Natural killer cell (primary cell): ENCODE measurements at regions of chr6 and their contacts with region 1.

Region 1: GRCh38 chr6:136317021-136317694 is 27.5 kb upstream of the BCLAF1 start:
- DNase-seq: peak; percentile 31 to 88
- ATAC-seq: peak; percentile 79 to 98 (median 94)
- H3K4me3 ChIP-seq: no peak overlapping the region
- H3K4me3 Mint-ChIP-seq: no peak overlapping the region
- H3K27ac ChIP-seq: no peak overlapping the region
- H3K27ac Mint-ChIP-seq: no peak overlapping the region
- H3K4me1 ChIP-seq: no peaks in the 10 kb centered on the region
- H3K4me1 Mint-ChIP-seq: peaks cover 0 to 4% of the 10 kb centered on the region in 2 donors
- H3K27me3 ChIP-seq: peaks cover 2% of the 10 kb centered on the region
- H3K27me3 Mint-ChIP-seq: no peaks in the 10 kb centered on the region
- CTCF ChIP-seq: peak; percentile 88

Region 2: DNA sequence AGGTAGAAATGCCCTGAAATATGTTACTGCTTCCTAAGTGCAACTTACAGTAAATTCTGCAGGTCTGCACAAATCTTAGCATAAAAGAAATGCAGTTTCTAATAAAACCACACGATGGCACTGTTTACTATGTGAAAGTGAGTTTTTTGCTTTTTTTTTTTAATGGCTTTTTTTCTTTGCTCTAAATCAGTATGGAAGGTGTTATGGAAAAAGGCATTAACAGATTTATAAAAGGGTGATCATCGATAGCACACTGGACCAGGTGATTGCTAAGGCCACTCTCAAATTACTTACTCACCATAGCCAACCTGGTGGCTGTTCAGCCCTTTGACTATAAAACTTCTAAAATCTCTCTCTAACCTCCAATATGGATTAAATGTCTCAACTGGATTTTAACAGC is 865.5 kb before region 1 on chr6:
- intact Hi-C with region 1: loop called (anchors 1 kb)
- DNase-seq: peak in 1 of 2 donors; percentile 68
- ATAC-seq: peak; percentile 49 to 60 (median 52)
- H3K4me3 ChIP-seq: no peak overlapping the region
- H3K4me3 Mint-ChIP-seq: no peak overlapping the region
- H3K27ac ChIP-seq: no peak overlapping the region
- H3K27ac Mint-ChIP-seq: no peak overlapping the region
- H3K4me1 ChIP-seq: no peaks in the 10 kb centered on the region
- H3K4me1 Mint-ChIP-seq: no peaks in the 10 kb centered on the region
- H3K27me3 ChIP-seq: no peaks in the 10 kb centered on the region
- H3K27me3 Mint-ChIP-seq: no peaks in the 10 kb centered on the region
- CTCF ChIP-seq: peak; percentile 80

Region 3: DNA sequence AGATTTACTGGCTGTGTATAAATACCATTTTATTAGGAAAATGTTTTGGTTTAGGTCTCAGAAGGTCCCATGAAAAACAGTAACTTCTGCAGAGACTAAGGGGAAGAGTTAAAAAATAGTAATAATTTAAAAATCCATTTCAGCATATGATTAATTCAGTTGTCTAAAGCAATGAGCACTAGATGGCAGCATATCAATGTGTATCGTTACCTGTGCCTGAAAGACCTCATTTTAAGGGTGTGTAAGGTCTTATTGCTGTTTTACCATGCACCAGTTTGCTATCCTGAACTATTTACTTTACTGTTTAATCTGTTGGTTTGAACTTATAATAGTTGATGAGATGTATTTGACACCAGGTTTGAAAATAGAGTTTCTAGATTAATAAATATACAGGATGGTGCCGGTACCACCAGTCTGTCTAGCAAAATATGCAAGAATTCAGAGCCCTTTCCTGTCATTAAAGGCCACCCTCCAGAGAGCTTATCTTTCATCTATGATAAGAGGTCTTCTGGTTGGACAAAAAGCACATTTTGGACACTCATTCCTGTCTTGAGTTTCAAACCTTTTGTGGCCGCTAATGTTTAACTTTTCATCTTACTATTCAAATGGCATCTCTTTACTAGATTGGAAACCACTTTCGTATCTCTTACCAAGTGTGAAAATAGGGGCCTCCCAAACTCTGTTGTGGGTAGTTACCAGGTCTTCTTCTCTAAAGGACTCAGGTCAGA is 810.7 kb before region 1 on chr6:
- intact Hi-C with region 1: loop called (anchors 1 kb)
- DNase-seq: peak in 1 of 2 donors; percentile 75
- ATAC-seq: peak; percentile 87 to 91 (median 88)
- H3K4me3 ChIP-seq: no peak overlapping the region
- H3K4me3 Mint-ChIP-seq: peak overlapping the region; percentile 17
- H3K27ac ChIP-seq: no peak overlapping the region
- H3K27ac Mint-ChIP-seq: peak overlapping the region; percentile 14 to 27
- H3K4me1 ChIP-seq: peaks cover 4% of the 10 kb centered on the region
- H3K4me1 Mint-ChIP-seq: peaks cover 6 to 8% of the 10 kb centered on the region in 2 donors
- H3K27me3 ChIP-seq: no peaks in the 10 kb centered on the region
- H3K27me3 Mint-ChIP-seq: no peaks in the 10 kb centered on the region
- CTCF ChIP-seq: peak; percentile 75

Region 4: DNA sequence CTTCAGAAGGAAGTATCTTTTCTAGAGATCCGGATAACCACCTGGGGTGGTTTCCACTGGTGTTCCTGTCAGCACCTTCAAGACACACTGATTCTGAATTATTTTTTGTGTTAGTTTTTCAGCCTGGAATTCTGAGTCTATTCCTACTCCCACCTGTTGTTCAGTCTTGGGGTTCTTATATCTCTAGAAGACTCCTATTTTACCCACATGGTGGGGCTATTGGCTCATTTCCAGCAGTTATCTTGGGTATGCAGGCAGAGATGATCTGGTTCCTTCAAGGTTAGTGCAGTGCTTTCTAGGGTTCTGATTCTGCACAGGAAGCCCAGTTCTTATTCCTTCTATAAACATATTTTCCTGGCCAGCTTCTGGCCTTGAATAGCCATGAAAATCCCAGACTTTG is 641.3 kb before region 1 on chr6:
- intact Hi-C with region 1: loop called (anchors 10 kb)
- DNase-seq: peak in 1 of 2 donors; percentile 80
- ATAC-seq: peak in 2 of 3 donors; percentile 70 to 74
- H3K4me3 ChIP-seq: no peak overlapping the region
- H3K4me3 Mint-ChIP-seq: no peak overlapping the region
- H3K27ac ChIP-seq: no peak overlapping the region
- H3K27ac Mint-ChIP-seq: no peak overlapping the region
- H3K4me1 ChIP-seq: no peaks in the 10 kb centered on the region
- H3K4me1 Mint-ChIP-seq: no peaks in the 10 kb centered on the region
- H3K27me3 ChIP-seq: no peaks in the 10 kb centered on the region
- H3K27me3 Mint-ChIP-seq: no peaks in the 10 kb centered on the region
- CTCF ChIP-seq: peak; percentile 58

Region 5: GRCh38 chr6:136031982-136032381 is 285.2 kb before region 1 on chr6:
- intact Hi-C with region 1: loop called (anchors 5 kb)
- DNase-seq: peak in 1 of 2 donors; percentile 34
- ATAC-seq: no peak
- H3K4me3 ChIP-seq: no peak overlapping the region
- H3K4me3 Mint-ChIP-seq: no peak overlapping the region
- H3K27ac ChIP-seq: no peak overlapping the region
- H3K27ac Mint-ChIP-seq: no peak overlapping the region
- H3K4me1 ChIP-seq: no peaks in the 10 kb centered on the region
- H3K4me1 Mint-ChIP-seq: no peaks in the 10 kb centered on the region
- H3K27me3 ChIP-seq: no peaks in the 10 kb centered on the region
- H3K27me3 Mint-ChIP-seq: no peaks in the 10 kb centered on the region
- CTCF ChIP-seq: no peak

Region 6: GRCh38 chr6:136249811-136250685 is 67.1 kb before region 1 on chr6 and contains the start of gene MTFR2:
- intact Hi-C with region 1: loop called (anchors 1 kb)
- DNase-seq: peak; percentile 91 to 98
- ATAC-seq: peak; percentile 92 to 97 (median 97)
- H3K4me3 ChIP-seq: peak within 1 kb of the TSS; percentile 71
- H3K4me3 Mint-ChIP-seq: peak within 1 kb of the TSS; percentile 98
- H3K27ac ChIP-seq: no peak within 1 kb of the TSS
- H3K27ac Mint-ChIP-seq: peak within 1 kb of the TSS; percentile 80 to 91
- H3K4me1 ChIP-seq: peaks cover 15% of the 10 kb centered on the region
- H3K4me1 Mint-ChIP-seq: peaks cover 24 to 32% of the 10 kb centered on the region in 2 donors
- H3K27me3 ChIP-seq: no peaks in the 10 kb centered on the region
- H3K27me3 Mint-ChIP-seq: no peaks in the 10 kb centered on the region
- CTCF ChIP-seq: no peak
- total RNA-seq, gene MTFR2: 1.7 to 2.1 (median 2.0) TPM

Region 7: GRCh38 chr6:136289579-136290409 is 27.4 kb before region 1 on chr6 and contains the start of gene BCLAF1:
- intact Hi-C with region 1: loop called (anchors 2 kb)
- DNase-seq: peak; percentile 99 to 100
- ATAC-seq: peak; percentile 68 to 88 (median 74)
- H3K4me3 ChIP-seq: peak within 1 kb of the TSS; percentile 91
- H3K4me3 Mint-ChIP-seq: peak within 1 kb of the TSS; percentile 98
- H3K27ac ChIP-seq: peak within 1 kb of the TSS; percentile 97
- H3K27ac Mint-ChIP-seq: peak within 1 kb of the TSS; percentile 95 to 99
- H3K4me1 ChIP-seq: peaks cover 40% of the 10 kb centered on the region
- H3K4me1 Mint-ChIP-seq: peaks cover 52 to 63% of the 10 kb centered on the region in 2 donors
- H3K27me3 ChIP-seq: no peaks in the 10 kb centered on the region
- H3K27me3 Mint-ChIP-seq: no peaks in the 10 kb centered on the region
- CTCF ChIP-seq: no peak
- total RNA-seq, gene BCLAF1: 391 to 582 (median 465) TPM